ENCODE measurements at regions of chr13 and their contacts with region 1.

Region 1: GRCh38 chr13:94620286-94620896 is 18.7 kb downstream of the GPR180 start:
- DNase-seq: peak; percentile 30
- CTCF ChIP-seq: peak; percentile 72

Region 2: DNA sequence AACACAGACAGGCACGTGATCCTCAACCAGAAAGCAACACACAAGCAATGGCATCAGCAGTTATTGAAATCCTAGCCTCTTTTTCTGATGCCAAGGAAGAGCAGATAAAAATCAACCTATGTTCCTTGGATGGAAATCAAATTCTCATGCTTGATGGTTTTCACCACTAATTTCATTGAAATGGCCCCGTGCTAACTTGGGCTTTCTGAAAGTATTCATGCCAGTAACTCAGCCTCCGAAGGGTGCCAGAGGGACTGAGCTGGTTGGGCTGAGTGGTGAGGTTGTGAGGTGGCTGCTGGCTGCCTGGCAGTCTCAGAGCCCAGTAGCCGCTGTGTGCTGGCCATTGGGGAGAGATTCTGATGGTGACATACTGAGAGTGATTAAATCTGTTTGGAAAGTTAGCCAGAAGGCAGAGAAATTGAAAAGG is 450.2 kb before region 1 on chr13:
- CTCF ChIA-PET with region 1: no interaction called
- POLR2A ChIA-PET with region 1: no interaction called
- DNase-seq: no peak
- CTCF ChIP-seq: no peak

Region 3: DNA sequence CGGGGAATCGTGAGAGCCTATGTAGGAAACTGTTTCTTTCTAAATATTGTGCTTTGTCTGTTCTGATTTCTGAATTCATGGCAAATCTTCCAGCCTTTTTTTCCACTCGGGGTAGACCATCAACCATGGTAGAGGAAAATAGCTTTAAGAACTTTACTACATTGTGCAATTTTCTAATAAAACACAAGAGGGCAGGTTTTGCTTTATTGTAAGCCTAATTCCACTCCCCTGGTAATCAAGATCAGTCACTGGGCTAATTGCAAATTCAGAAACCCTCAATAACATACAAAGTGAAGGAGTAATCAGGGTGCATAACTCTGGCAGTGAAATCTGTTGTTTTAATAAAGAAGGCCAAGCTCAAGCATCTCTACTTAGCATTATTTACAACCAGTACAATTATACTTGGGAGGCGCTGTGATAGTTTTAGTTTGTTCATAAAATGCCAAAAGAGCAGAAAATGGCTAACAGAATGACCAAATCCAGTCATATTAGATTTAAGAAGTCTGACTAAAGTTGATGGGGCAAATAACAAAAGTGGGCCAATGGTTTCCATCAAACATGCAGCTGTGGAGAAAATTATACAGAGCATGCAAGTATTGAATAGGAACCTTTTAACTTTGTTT is 184.7 kb before region 1 on chr13:
- CTCF ChIA-PET with region 1: interaction called, 137 read pairs
- POLR2A ChIA-PET with region 1: no interaction called
- DNase-seq: peak; percentile 32
- CTCF ChIP-seq: peak; percentile 57

Region 4: GRCh38 chr13:94595950-94596574 is 24.3 kb before region 1 on chr13 and contains the start of gene TGDS:
- CTCF ChIA-PET with region 1: interaction called, 105 read pairs
- POLR2A ChIA-PET with region 1: no interaction called
- DNase-seq: peak; percentile 93
- CTCF ChIP-seq: no peak

Region 5: GRCh38 chr13:94601446-94602431 is 18.7 kb before region 1 on chr13 and contains the start of gene GPR180:
- CTCF ChIA-PET with region 1: interaction called, 105 read pairs
- POLR2A ChIA-PET with region 1: interaction called, 4 read pairs
- DNase-seq: peak; percentile 96
- CTCF ChIP-seq: no peak

Region 6: GRCh38 chr13:94608586-94608985 is 11.8 kb before region 1 on chr13:
- CTCF ChIA-PET with region 1: interaction called, 105 read pairs
- POLR2A ChIA-PET with region 1: no interaction called
- DNase-seq: no peak
- CTCF ChIP-seq: no peak

Region 7: GRCh38 chr13:94632227-94632980 is 12.0 kb after region 1 on chr13:
- CTCF ChIA-PET with region 1: interaction called, 65 read pairs
- POLR2A ChIA-PET with region 1: no interaction called
- DNase-seq: no peak
- CTCF ChIP-seq: no peak

Region 8: GRCh38 chr13:95226932-95227695 is 606.7 kb after region 1 on chr13:
- CTCF ChIA-PET with region 1: no interaction called
- POLR2A ChIA-PET with region 1: no interaction called
- DNase-seq: peak; percentile 69
- CTCF ChIP-seq: no peak

Measured in GM10248 (cell line).